WTC11 (cell line): ENCODE measurements at regions of chr19 and their contacts with region 1.

Region 1: GRCh38 chr19:50230379-50231351 is 27.2 kb downstream of the MYH14 start:
- DNase-seq: peak; percentile 76
- ATAC-seq: peak; percentile 89
- H3K4me3 Mint-ChIP-seq: peak overlapping the region; percentile 41
- H3K27ac Mint-ChIP-seq: no peak overlapping the region
- H3K4me1 Mint-ChIP-seq: peaks cover 10% of the 10 kb centered on the region
- H3K27me3 Mint-ChIP-seq: no peaks in the 10 kb centered on the region
- CTCF ChIP-seq: peak; percentile 61

Region 2: DNA sequence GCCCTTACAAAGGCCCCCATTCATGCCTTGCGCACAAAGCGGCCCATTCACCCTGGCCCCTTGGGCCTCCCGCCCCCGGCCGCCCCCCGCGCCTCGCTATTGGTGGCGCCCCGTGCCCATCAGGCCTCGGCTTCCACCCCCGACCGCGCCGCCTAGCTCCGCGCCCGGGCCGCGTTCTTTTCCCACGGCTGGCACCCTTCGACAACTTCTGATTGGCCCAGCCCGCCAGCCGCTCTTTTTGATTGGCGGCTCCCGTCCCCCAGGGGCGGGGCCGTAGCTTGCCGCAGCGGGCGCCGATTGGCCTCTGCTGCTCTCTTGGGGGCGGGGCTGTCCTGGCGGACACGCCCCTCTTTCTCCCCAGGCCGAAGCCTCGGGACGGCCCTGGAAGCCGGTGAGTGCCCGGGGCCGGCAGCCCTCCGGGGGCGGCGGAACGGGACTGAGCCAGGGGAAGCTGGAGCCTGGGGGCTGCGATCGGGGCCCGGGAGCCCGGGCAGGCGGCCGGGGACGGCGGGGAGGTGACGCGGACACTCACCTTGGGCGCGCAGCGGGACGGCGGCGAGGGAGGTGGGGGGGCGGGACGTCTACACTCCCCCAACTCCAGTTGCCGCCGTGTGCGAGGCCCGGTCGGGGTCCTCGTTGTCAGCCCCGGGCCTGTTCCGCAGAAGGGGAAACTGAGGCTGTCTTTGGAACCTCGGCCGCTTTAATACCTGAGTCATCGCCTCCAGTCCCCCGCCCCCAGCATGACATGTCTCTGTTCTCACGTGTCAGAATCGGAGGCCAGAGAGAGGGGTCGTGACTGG is 27.2 kb before region 1 on chr19 and contains the start of gene MYH14:
- CTCF ChIA-PET with region 1: interaction called, 16 read pairs
- POLR2A ChIA-PET with region 1: interaction called, 3 read pairs
- DNase-seq: peak; percentile 96
- ATAC-seq: peak; percentile 71
- H3K4me3 Mint-ChIP-seq: peak within 1 kb of the TSS; percentile 65
- H3K27ac Mint-ChIP-seq: no peak within 1 kb of the TSS
- H3K4me1 Mint-ChIP-seq: peaks cover 13% of the 10 kb centered on the region
- H3K27me3 Mint-ChIP-seq: peaks cover 46% of the 10 kb centered on the region
- CTCF ChIP-seq: no peak
- total RNA-seq, gene MYH14: 25.8 to 33.5 TPM (median 31.2 TPM) in 3 replicates

Region 3: DNA sequence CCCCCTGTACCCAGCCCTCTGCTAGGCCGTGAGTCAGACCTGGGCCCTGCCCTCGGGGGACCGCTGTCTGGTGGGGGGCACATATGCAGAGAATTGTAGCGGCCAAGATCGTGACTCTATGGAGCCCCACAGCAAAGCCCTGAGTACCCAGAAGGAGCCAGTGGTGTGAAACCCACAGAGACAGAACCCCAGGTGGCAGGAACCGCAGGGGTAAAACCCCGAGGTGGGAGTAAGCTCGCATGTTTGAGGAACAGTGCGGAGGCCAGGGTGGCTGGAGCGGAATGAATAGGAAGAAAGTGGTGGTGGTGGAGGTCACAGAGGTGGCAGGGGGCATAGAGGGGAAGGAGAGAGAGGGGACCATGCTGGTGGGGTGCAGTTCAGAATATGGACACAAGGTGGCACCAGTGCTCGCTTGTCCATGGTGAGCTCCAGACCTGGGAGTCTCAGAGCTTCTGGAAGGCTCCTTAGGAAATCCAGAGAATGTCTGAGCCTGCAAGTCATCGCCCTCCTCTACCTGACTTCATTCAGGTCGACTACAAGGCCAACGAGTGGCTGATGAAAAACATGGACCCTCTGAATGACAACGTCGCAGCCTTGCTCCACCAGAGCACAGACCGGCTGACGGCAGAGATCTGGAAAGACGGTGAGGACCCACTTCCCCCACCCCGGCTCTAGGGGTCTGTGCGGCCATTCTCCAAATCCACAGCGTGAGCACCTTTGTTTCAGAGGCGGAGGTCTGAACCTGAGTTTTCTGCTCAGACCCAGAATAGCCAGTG is 21.6 kb after region 1 on chr19:
- CTCF ChIA-PET with region 1: interaction called, 53 read pairs
- POLR2A ChIA-PET with region 1: no interaction called
- DNase-seq: peak; percentile 82
- ATAC-seq: peak; percentile 88
- H3K4me3 Mint-ChIP-seq: no peak overlapping the region
- H3K27ac Mint-ChIP-seq: no peak overlapping the region
- H3K4me1 Mint-ChIP-seq: no peaks in the 10 kb centered on the region
- H3K27me3 Mint-ChIP-seq: peaks cover 9% of the 10 kb centered on the region
- CTCF ChIP-seq: peak; percentile 82

Region 4: DNA sequence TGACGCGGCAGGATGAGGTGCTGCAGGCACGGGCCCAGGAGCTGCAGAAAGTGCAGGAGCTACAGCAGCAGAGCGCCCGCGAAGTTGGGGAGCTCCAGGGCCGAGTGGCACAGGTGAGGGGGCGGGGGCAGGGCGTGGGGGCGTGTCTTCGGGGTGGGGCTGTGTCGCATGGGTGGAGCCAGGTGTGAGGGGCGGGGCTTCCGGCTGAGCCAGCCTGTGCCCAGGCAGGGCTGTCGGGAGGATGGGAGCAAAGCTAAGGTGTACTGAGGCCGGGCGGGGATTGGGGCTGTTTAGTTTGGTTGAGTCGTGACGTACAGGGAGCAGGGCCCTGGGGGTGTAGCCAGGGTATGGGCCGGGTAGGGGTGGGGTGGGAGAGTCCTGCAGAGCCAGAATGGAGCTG is 36.2 kb after region 1 on chr19:
- CTCF ChIA-PET with region 1: interaction called, 15 read pairs
- POLR2A ChIA-PET with region 1: no interaction called
- DNase-seq: peak; percentile 96
- ATAC-seq: peak; percentile 99
- H3K4me3 Mint-ChIP-seq: peak overlapping the region; percentile 32
- H3K27ac Mint-ChIP-seq: no peak overlapping the region
- H3K4me1 Mint-ChIP-seq: peaks cover 8% of the 10 kb centered on the region
- H3K27me3 Mint-ChIP-seq: no peaks in the 10 kb centered on the region
- CTCF ChIP-seq: no peak

Region 5: GRCh38 chr19:50329146-50329925 is 98.7 kb after region 1 on chr19 and contains the start of gene KCNC3:
- CTCF ChIA-PET with region 1: interaction called, 13 read pairs
- POLR2A ChIA-PET with region 1: interaction called, 4 read pairs
- DNase-seq: peak; percentile 100
- ATAC-seq: peak; percentile 62
- H3K4me3 Mint-ChIP-seq: peak within 1 kb of the TSS; percentile 85
- H3K27ac Mint-ChIP-seq: peak within 1 kb of the TSS; percentile 98
- H3K4me1 Mint-ChIP-seq: peaks cover 49% of the 10 kb centered on the region
- H3K27me3 Mint-ChIP-seq: peaks cover 38% of the 10 kb centered on the region
- CTCF ChIP-seq: no peak
- total RNA-seq, gene KCNC3: 8.5 to 10.1 TPM (median 10.0 TPM) in 3 replicates